ENCODE measurements at regions of chr17 and their contacts with region 1.

Region 1: GRCh38 chr17:76397687-76398487 is 13.5 kb downstream of the SPHK1 start:
- DNase-seq: peak; percentile 88 to 90
- ATAC-seq: peak; percentile 78 to 93
- H3K4me3 ChIP-seq: no peak overlapping the region
- H3K27ac ChIP-seq: no peak overlapping the region
- H3K4me1 ChIP-seq: no peaks in the 10 kb centered on the region
- CTCF ChIP-seq: peak; percentile 95
- EP300 ChIP-seq: no peak
- POLR2A ChIP-seq: no peak
- RAD21 ChIP-seq: peak; percentile 78 to 86

Region 2: GRCh38 chr17:76296186-76296585 is 101.7 kb before region 1 on chr17:
- CTCF ChIA-PET with region 1: interaction called, 252 read pairs
- POLR2A ChIA-PET with region 1: no interaction called
- DNase-seq: no peak
- ATAC-seq: no peak
- H3K4me3 ChIP-seq: no peak overlapping the region
- H3K27ac ChIP-seq: no peak overlapping the region
- H3K4me1 ChIP-seq: no peaks in the 10 kb centered on the region
- CTCF ChIP-seq: no peak
- EP300 ChIP-seq: no peak
- POLR2A ChIP-seq: no peak
- RAD21 ChIP-seq: no peak

Region 3: DNA sequence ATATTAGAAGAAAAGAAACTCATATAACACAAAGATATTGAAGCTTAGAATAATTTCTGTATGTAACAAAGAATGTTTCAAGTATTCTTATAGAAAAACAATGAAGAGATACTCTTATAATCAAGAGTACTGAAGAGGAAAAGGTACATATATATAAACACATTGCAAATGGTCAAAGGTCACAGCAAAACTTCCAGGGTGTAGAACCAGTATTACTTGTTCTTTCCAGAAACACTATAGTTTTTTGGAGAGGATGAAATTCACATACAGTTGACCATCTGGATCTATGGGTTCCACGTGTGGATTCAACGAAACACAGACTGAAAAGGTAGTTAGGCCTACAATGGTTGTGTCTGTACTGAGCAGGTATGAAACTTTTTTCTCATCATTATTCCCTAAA is 66.8 kb before region 1 on chr17:
- CTCF ChIA-PET with region 1: interaction called, 20 read pairs
- POLR2A ChIA-PET with region 1: no interaction called
- DNase-seq: no peak
- ATAC-seq: no peak
- H3K4me3 ChIP-seq: no peak overlapping the region
- H3K27ac ChIP-seq: no peak overlapping the region
- H3K4me1 ChIP-seq: no peaks in the 10 kb centered on the region
- CTCF ChIP-seq: no peak
- EP300 ChIP-seq: no peak
- POLR2A ChIP-seq: no peak
- RAD21 ChIP-seq: no peak

Region 4: GRCh38 chr17:76353599-76354316 is 44.1 kb before region 1 on chr17 and contains the start of gene PRPSAP1:
- CTCF ChIA-PET with region 1: interaction called, 899 read pairs
- POLR2A ChIA-PET with region 1: interaction called, 11 read pairs
- DNase-seq: peak; percentile 95 to 98
- ATAC-seq: peak; percentile 97 to 98
- H3K4me3 ChIP-seq: peak within 1 kb of the TSS; percentile 83
- H3K27ac ChIP-seq: peak within 1 kb of the TSS; percentile 93 to 97
- H3K4me1 ChIP-seq: peaks cover 18% of the 10 kb centered on the region; the same call in 2 of the 3 replicates
- CTCF ChIP-seq: no peak
- EP300 ChIP-seq: no peak; a peak in 1 of 5 replicates
- POLR2A ChIP-seq: peak; percentile 98
- RAD21 ChIP-seq: no peak
- polyA plus RNA-seq, gene PRPSAP1: 80.9 and 92.1 TPM in 2 replicates

Region 5: DNA sequence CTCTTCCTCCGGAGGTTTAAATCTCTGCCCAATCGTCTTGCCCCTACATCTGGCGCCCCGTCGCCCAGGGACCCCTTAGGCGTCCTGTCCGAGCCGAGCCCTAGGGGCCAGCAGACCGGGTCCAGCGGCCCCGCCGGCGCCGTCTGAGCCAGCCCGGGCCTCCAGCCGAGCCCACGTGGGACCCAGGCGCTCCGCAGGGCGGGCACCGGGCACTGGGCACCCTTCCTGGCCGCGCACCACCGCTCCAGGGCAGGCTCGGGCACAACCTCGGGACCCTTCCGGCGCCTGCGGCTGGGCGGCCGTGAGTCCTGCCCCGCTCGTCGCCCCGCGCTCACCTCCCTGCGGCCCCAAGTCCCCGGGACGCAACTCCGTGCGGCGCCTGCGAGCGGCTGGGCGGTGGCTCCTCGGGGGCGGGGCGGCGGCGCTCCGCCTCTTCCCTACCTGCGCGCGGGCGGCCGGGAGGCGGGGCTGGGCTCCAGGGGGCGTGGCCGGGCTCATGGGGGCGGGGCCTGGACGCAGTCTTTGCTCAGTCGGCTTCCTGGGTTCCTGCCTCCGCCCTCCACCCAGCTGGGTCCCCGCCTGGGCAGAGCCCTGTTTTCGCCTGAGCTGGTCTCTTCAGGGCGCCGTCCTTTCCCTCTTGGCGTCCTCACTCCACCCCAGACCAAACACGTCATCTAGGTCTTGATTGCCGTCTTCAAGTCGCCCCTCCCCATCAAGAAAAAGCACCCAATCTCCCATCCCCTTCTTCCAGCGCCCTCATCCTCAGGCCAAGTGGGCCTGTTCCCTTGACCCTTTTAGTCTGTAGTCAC is 103.3 kb after region 1 on chr17 and contains the start of gene RHBDF2:
- CTCF ChIA-PET with region 1: interaction called, 72 read pairs
- POLR2A ChIA-PET with region 1: no interaction called
- DNase-seq: peak; percentile 87 to 97
- ATAC-seq: peak; percentile 73 to 81
- H3K4me3 ChIP-seq: peak within 1 kb of the TSS; percentile 81
- H3K27ac ChIP-seq: peak within 1 kb of the TSS; percentile 83 to 96
- H3K4me1 ChIP-seq: peaks cover 41% of the 10 kb centered on the region
- CTCF ChIP-seq: no peak
- EP300 ChIP-seq: no peak
- POLR2A ChIP-seq: peak; percentile 82
- RAD21 ChIP-seq: no peak
- polyA plus RNA-seq, gene RHBDF2: 14.0 and 19.9 TPM in 2 replicates

Region 6: DNA sequence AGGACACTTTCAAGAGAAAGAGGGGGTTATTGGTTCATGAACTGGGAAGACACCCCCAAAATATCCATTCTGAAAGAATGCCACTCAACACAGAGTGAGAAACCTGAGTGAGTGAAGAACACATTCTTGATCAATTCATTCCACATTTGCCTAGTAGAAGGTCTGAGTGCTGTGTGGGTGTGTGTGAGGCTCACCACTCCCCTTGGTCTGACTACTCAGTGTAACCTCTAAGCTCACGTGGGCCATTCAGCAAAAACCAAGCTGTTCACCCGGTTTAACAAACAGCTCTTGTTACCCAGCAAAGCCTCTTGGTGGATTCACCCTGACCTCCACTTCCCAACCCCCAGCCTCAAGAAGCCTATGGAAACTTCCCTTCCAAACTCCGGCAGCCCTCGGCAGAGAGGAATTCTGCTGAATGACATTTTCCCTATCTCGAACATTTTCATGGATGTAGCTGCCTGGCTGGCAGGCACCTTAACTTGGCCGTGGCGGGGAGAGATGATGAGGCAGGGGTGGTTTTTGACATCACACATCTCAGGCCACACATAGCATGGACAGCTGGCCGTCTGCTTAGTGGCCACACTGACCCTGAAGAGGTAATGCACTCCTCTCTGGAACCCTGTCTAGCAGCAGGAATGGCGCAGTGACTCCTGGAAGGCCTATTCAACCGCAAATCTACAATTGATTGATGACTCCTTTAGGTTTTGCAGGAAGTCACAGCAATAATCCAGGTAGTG is 234.1 kb after region 1 on chr17:
- CTCF ChIA-PET with region 1: no interaction called
- POLR2A ChIA-PET with region 1: no interaction called
- DNase-seq: no peak
- ATAC-seq: no peak
- H3K4me3 ChIP-seq: no peak overlapping the region
- H3K27ac ChIP-seq: no peak overlapping the region
- H3K4me1 ChIP-seq: no peaks in the 10 kb centered on the region
- CTCF ChIP-seq: no peak
- EP300 ChIP-seq: no peak
- POLR2A ChIP-seq: no peak
- RAD21 ChIP-seq: no peak

Region 7: DNA sequence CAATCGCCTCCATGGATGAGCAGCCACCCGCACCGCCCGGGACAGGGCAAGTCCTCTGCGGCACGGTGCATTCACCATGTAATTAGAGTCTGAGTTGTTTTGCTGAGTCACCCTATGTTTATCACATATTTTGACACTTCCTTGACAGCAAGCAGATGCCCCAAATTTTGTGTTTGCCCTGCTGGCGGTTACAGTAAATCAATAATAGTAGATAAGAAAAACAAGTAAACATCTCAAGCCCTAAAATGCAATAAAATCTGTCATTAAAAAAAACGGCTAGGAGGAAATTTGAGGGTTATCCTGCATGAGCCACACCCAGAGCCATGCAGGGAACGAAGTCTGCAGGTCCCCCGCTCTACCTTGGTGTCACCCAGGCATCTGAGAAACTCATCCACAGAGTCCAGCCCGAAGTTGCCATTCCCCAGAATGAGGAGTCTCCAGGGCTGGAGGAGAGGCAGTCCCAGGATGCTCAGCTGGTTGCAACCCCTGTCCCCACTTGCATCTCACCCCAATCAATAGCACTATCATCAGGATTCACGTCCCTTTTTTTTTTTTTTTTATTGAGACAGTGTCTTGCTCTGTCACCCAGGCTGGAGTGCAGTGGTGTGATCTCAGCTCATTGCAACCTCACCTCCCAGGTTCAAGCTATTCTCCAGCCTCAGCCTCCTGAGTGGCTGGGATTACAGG is 262.2 kb after region 1 on chr17:
- CTCF ChIA-PET with region 1: no interaction called
- POLR2A ChIA-PET with region 1: no interaction called
- DNase-seq: peak in 1 of 2 experiments; percentile 59
- ATAC-seq: peak; percentile 17 to 80; a peak in 4 of 6 replicates
- H3K4me3 ChIP-seq: no peak overlapping the region
- H3K27ac ChIP-seq: peak overlapping the region; percentile 34 to 74
- H3K4me1 ChIP-seq: peaks cover 18% of the 10 kb centered on the region
- CTCF ChIP-seq: no peak
- EP300 ChIP-seq: no peak
- POLR2A ChIP-seq: no peak
- RAD21 ChIP-seq: no peak

Measured in A549 (cell line).